Activated naive CD4-positive, alpha-beta T cell treated with anti-CD3 and anti-CD28 coated beads, Interleukin-2, amount 10 ng/mL, durations not matched to agents 7 days and 5 days (primary cell): ENCODE measurements at regions of chr5 and their contacts with region 1.

Region 1: GRCh38 chr5:61055434-61056006 is 106.7 kb downstream of the SMIM15 start:
- DNase-seq: no peak
- H3K4me3 Mint-ChIP-seq: no peak overlapping the region
- H3K27ac Mint-ChIP-seq: no peak overlapping the region
- H3K4me1 Mint-ChIP-seq: no peaks in the 10 kb centered on the region
- H3K27me3 Mint-ChIP-seq: no peaks in the 10 kb centered on the region

Region 2: GRCh38 chr5:61023131-61023530 is 32.4 kb before region 1 on chr5:
- CTCF ChIA-PET with region 1: no interaction called
- DNase-seq: no peak
- H3K4me3 Mint-ChIP-seq: no peak overlapping the region
- H3K27ac Mint-ChIP-seq: no peak overlapping the region
- H3K4me1 Mint-ChIP-seq: no peaks in the 10 kb centered on the region
- H3K27me3 Mint-ChIP-seq: no peaks in the 10 kb centered on the region

Region 3: DNA sequence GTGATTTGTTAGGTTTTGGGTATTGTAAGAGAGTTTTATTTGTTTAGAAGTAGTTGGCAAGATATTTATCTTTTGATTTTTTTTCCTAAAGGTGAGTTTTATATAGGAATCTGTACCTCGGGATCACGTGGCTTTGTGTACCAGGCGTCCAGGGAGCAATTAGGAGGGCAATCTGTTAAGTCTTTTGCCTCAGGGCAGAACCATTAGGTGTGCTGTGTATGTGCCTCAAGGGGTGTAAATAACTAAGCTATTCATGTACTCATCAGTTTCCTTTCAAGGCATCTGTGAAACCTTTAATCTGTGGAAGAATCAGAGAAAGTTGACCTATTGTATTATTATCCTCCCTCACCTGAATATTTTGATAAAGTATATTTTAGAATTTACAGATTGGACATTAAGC is 316.0 kb after region 1 on chr5:
- CTCF ChIA-PET with region 1: no interaction called
- DNase-seq: no peak
- H3K4me3 Mint-ChIP-seq: no peak overlapping the region
- H3K27ac Mint-ChIP-seq: no peak overlapping the region
- H3K4me1 Mint-ChIP-seq: no peaks in the 10 kb centered on the region
- H3K27me3 Mint-ChIP-seq: no peaks in the 10 kb centered on the region

Region 4: DNA sequence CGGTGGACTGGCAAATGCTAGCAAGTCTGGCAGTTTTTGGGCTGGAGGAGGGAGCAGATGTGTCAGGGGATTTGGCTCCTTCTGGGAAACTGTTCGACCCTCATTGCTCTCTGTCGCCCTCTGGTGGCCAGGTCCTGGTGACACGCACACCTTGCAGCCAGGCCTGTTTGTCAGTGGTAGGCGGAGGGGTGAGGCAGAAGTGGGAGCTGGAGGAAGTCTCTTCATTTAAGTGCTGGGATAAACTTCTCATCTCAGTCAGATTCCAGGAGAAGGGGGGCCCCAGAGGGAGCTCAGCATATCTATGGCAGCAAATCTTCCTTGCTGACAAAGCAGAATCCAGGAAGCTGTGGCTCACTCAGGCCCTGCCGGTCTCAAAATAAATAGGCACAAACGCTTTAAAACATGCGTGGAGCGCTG is 603.1 kb after region 1 on chr5:
- CTCF ChIA-PET with region 1: interaction called, 36 read pairs
- DNase-seq: peak; percentile 84
- H3K4me3 Mint-ChIP-seq: no peak overlapping the region
- H3K27ac Mint-ChIP-seq: no peak overlapping the region
- H3K4me1 Mint-ChIP-seq: no peaks in the 10 kb centered on the region
- H3K27me3 Mint-ChIP-seq: peaks cover 9% of the 10 kb centered on the region